ENCODE measurements at regions of chr11 and their contacts with region 1.

Region 1: GRCh38 chr11:120801801-120802689 is 221.9 kb upstream of the TBCEL start:
- DNase-seq: peak; percentile 76
- ATAC-seq: peak; percentile 64
- H3K4me3 ChIP-seq: no peak overlapping the region
- H3K27ac ChIP-seq: no peak overlapping the region
- H3K4me1 ChIP-seq: peaks cover 2% of the 10 kb centered on the region
- H3K27me3 ChIP-seq: peaks cover 10% of the 10 kb centered on the region
- CTCF ChIP-seq: peak; percentile 95

Region 2: DNA sequence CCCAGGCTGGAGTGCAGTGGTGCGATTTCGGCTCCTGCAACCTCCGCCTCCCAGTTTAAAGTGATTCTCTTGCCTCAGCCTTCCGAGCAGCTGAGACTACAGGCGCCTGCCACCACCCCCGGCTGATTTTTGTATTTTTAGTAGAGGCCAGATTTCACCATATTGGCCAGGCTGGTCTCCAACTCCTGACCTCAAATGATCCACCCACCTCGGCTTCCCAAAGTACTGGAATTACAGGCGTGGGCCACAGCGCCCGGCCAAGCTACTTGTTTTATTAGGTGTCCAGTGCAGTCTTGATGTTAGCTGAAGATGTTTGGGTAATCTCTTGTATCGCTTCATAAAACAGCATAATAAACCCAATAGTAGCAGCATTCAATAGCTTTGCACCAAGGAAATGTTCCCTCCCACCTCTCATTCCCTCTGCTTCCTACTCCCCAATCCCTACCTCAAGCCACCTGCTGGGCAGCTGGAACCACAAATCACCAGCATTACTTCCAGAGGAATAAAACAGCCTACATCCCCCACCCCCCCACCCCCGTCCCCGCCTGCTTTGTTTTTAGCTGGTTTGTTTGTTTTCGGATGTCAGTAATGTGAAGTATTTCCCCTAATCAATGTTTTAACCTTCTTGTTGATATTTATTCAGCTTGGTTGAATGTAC is 301.5 kb before region 1 on chr11:
- CTCF ChIA-PET with region 1: no interaction called
- POLR2A ChIA-PET with region 1: no interaction called
- intact Hi-C with region 1: loop called (anchors 10 kb)
- DNase-seq: peak; percentile 32
- ATAC-seq: peak; percentile 48
- H3K4me3 ChIP-seq: no peak overlapping the region
- H3K27ac ChIP-seq: no peak overlapping the region
- H3K4me1 ChIP-seq: no peaks in the 10 kb centered on the region
- H3K27me3 ChIP-seq: peaks cover 32% of the 10 kb centered on the region
- CTCF ChIP-seq: peak; percentile 22; the same call in 1 of the 2 replicates

Region 3: DNA sequence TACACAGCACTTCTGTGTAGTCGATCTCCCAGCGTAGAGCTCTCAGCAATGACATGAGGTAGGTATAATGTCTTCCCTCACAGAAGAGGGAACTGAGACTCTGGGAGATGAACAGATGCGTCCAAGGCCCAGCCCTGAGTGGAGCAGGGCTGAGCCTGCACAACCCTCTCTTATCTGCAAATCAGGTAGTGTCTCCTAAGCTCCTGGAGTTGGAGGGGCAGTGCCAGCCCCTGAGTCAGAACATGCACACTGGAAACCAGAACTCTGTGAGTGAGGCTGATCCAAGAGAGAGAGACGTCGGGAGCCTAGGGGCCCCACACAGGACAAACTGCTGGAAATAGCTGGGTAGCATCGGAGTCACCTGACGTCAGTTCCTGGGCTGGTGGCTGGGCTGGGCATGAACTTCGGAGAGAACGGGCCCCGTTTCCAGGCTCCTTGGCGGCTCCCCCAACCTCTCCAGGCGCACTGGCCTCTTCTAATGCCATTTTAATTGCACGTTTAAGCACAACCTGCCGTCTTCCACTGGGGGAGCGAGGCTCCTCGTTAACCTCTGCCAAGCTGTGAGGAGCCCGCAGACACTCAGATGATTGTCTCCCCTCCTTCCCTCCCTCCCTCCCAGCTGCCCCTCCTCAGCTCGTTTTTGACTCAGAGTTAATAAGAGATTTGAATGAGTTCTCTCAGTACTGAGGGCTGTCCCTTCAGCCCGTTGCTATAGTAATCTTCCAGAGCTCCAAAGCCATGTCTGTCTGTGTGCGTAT is 30.6 kb after region 1 on chr11:
- CTCF ChIA-PET with region 1: no interaction called
- POLR2A ChIA-PET with region 1: no interaction called
- intact Hi-C with region 1: no loop called
- DNase-seq: no peak
- ATAC-seq: no peak
- H3K4me3 ChIP-seq: no peak overlapping the region
- H3K27ac ChIP-seq: no peak overlapping the region
- H3K4me1 ChIP-seq: no peaks in the 10 kb centered on the region
- H3K27me3 ChIP-seq: peaks cover 89% of the 10 kb centered on the region
- CTCF ChIP-seq: no peak